ENCODE measurements at regions of chr16 and their contacts with region 1.

Region 1: GRCh38 chr16:8936421-8936820 is 27.3 kb downstream of the USP7 start:
- DNase-seq: peak; percentile 76
- ATAC-seq: peak; percentile 90
- H3K4me3 Mint-ChIP-seq: no peak overlapping the region
- H3K27ac Mint-ChIP-seq: peak overlapping the region; percentile 34; the same call in 1 of the 2 replicates
- H3K4me1 Mint-ChIP-seq: peaks cover 71% of the 10 kb centered on the region
- H3K27me3 Mint-ChIP-seq: no peaks in the 10 kb centered on the region
- CTCF ChIP-seq: peak; percentile 39; the same call in 1 of the 2 replicates

Region 2: DNA sequence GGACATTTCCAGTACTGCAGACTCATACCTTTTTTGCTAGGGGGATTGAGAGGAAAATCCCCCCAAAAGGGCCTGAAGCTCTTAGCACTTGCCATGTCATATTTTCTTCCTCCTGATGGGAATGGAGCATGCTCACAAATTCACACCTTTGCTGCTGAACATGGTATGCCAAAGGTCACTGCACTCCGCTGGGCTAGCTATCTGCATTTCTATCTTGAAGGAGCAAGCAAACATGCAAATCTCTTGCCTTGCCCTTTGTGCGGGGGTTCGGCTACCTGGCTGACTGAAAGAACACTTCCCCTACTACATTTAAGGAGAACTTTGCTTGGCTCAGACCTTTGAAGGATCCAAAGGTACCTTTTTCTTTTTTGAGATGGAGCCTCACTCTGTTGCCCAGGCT is 243.9 kb before region 1 on chr16:
- CTCF ChIA-PET with region 1: no interaction called
- POLR2A ChIA-PET with region 1: no interaction called
- DNase-seq: no peak
- ATAC-seq: no peak
- H3K4me3 Mint-ChIP-seq: no peak overlapping the region
- H3K27ac Mint-ChIP-seq: no peak overlapping the region
- H3K4me1 Mint-ChIP-seq: 0 out of 2 replicates have a peak, but pooled peaks cover 3% of the 10 kb centered on the region
- H3K27me3 Mint-ChIP-seq: no peaks in the 10 kb centered on the region; the same call in 1 of the 2 replicates
- CTCF ChIP-seq: no peak

Region 3: DNA sequence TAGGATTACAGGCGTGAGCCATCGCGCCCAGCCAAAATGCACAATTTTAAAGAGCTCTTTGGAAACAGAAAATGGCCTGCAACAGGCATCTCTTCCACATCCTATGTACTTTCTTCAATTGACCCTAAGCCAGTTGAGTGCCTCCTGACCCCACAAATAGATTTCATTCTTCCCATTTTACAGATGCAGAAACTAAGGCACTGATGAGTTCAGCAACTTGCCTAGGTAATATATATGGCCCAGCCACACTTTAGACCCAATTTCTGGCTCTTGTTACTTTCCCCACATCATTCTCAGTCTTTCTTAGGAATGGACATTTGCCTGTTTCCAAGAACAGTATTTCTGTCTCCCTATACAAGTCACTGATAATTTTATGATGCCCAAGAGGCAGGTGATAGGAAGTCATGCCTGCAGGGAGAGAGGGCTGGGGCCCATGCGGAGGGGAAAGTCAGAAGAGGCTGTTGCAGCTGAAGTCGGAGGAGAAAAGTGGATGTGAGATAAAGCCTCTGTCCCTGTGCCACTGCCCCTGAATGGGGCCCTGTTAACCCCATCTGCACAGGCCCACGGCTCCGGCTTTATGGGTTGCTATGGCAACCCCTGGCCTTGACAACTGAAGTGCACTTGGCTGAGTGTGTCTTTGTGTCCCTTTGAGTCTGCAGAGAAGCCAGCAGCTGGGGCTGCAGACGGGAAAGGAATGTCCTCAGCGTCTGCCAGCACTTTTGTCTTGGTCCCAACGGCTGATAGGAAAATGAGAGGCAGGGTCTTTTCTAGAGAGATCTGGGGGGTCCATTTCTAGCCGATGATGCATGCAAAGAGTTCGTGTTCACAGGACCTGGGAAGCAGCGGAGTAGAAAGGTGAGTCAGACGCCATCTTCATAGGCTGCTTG is 216.1 kb before region 1 on chr16:
- CTCF ChIA-PET with region 1: no interaction called
- POLR2A ChIA-PET with region 1: no interaction called
- DNase-seq: peak; percentile 55
- ATAC-seq: peak; percentile 83
- H3K4me3 Mint-ChIP-seq: no peak overlapping the region
- H3K27ac Mint-ChIP-seq: no peak overlapping the region
- H3K4me1 Mint-ChIP-seq: no peaks in the 10 kb centered on the region
- H3K27me3 Mint-ChIP-seq: no peaks in the 10 kb centered on the region
- CTCF ChIP-seq: no peak

Region 4: DNA sequence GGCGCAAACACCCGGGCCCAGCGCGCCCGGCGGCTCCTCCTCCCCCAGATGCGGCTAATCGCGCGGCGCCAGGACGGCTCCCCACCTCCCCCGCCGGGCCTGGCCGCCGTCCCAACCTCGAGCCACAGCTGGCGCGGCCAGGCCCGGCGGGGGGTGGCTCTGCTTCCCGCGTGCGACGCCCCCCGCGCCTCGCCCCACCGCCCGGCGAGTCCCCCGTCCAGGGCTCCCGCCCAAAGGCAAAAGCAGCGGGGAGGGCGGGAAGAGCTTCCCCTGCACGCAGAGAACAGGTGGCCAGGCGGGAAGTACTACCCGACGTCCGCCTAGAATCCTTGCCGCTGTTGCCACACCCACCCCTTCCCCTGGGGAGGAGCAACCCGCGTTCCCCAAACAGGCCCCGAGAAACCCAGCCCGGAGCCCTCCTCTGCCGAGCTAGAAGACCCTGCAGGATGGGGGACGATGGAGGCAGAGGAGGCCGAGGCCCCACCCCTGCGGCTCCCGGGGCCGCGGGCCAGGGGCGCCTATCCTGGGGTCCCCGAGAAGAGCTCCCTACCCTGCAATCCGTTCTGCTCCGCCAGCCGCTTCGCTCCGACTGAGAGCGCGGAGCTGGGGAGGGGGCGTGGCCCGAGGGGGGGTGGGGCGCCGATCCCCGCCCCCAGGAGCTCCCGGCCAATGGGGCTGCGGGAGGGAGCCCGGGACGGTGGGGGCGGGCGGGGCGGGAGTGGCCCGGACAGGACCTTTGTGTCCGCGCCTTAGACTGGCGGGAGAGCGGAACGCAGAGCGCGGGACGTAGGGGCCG is 67.8 kb before region 1 on chr16 and contains the start of gene CARHSP1:
- CTCF ChIA-PET with region 1: interaction called, 13 read pairs
- POLR2A ChIA-PET with region 1: no interaction called
- DNase-seq: peak; percentile 92
- ATAC-seq: peak; percentile 59
- H3K4me3 Mint-ChIP-seq: peak within 1 kb of the TSS; percentile 89
- H3K27ac Mint-ChIP-seq: peak within 1 kb of the TSS; percentile 99
- H3K4me1 Mint-ChIP-seq: peaks cover 40% of the 10 kb centered on the region
- H3K27me3 Mint-ChIP-seq: no peaks in the 10 kb centered on the region
- CTCF ChIP-seq: no peak
- total RNA-seq, gene CARHSP1: 260 to 271 TPM (median 261 TPM) in 3 replicates

Region 5: DNA sequence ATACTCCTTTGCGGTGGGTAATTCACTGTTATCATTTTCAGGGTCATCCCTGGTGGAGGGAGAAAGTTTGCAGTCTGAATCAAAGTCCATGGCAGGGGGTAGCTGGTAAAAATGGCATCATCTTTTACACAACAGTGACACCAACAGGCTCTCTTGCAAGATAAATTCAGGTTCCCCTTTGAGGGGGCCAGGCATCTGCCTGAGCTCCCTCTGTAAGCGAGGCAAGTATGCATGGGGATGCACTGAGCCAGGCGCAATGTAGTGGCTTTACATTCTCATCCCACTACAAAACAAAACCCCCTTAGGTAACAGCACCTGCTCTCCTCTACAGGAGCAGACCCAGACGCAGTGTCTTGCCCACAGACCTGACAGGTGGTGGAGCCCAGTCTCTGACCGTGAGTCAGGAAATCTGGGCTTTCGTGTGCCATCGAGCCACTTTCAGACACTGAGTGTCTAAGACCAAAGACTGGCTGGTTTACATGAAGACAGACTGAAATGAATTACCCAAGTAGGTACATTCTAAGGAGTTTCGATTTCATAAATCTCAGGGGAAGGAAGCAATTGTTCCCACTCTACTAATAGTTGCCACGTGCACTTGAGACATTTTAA is 36.6 kb before region 1 on chr16:
- CTCF ChIA-PET with region 1: interaction called, 15 read pairs
- POLR2A ChIA-PET with region 1: no interaction called
- DNase-seq: no peak
- ATAC-seq: peak; percentile 65
- H3K4me3 Mint-ChIP-seq: no peak overlapping the region
- H3K27ac Mint-ChIP-seq: peak overlapping the region; percentile 37
- H3K4me1 Mint-ChIP-seq: no peaks in the 10 kb centered on the region
- H3K27me3 Mint-ChIP-seq: no peaks in the 10 kb centered on the region
- CTCF ChIP-seq: no peak

Region 6: DNA sequence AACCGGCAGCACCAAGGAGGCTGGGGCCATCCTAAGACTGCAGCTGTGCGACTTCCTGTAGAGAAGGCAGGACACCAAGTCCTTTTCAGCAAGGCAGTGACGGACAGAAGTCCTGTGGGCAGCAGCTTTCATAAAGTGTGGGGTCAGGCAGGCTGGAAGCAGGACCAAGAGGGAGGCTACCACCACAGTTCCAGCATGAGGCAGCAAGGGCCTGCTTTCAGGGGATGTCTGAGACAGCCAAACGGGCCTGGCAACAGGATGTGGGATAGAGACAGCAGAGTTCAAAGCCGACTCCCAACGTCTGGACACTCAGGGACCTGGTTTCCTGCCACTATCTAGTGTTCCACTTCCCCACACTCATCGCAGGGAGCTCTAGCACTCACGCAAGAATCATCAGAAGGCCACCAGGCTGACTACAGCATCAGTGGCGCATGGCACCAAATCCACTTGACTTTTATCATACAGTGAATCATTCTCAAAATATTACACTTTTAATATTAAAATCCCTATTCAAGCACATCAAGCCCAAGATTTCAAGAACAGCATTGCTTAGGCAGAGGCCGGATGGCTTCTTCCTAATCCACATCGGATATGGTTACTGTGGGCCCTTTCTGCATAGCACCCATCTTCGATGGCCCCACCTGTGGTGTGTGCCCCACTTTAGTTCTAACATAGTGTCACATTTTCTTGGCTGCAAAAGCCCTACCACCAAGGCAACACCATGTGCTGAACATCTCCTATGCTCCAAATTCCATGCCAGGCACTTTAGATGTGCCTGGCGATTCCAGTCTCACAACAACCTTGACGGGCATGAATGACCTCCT is 22.1 kb after region 1 on chr16:
- CTCF ChIA-PET with region 1: interaction called, 43 read pairs
- POLR2A ChIA-PET with region 1: interaction called, 4 read pairs
- DNase-seq: no peak
- ATAC-seq: peak; percentile 7
- H3K4me3 Mint-ChIP-seq: peak overlapping the region; percentile 15; the same call in 1 of the 2 replicates
- H3K27ac Mint-ChIP-seq: peak overlapping the region; percentile 69
- H3K4me1 Mint-ChIP-seq: peaks cover 76% of the 10 kb centered on the region
- H3K27me3 Mint-ChIP-seq: no peaks in the 10 kb centered on the region
- CTCF ChIP-seq: no peak

Region 7: GRCh38 chr16:8989099-8989878 is 52.9 kb after region 1 on chr16:
- CTCF ChIA-PET with region 1: interaction called, 27 read pairs
- POLR2A ChIA-PET with region 1: no interaction called
- DNase-seq: no peak
- ATAC-seq: no peak
- H3K4me3 Mint-ChIP-seq: no peak overlapping the region
- H3K27ac Mint-ChIP-seq: no peak overlapping the region; the same call in 1 of the 2 replicates
- H3K4me1 Mint-ChIP-seq: peaks cover 30% of the 10 kb centered on the region
- H3K27me3 Mint-ChIP-seq: peaks cover 15% of the 10 kb centered on the region
- CTCF ChIP-seq: no peak

Region 8: DNA sequence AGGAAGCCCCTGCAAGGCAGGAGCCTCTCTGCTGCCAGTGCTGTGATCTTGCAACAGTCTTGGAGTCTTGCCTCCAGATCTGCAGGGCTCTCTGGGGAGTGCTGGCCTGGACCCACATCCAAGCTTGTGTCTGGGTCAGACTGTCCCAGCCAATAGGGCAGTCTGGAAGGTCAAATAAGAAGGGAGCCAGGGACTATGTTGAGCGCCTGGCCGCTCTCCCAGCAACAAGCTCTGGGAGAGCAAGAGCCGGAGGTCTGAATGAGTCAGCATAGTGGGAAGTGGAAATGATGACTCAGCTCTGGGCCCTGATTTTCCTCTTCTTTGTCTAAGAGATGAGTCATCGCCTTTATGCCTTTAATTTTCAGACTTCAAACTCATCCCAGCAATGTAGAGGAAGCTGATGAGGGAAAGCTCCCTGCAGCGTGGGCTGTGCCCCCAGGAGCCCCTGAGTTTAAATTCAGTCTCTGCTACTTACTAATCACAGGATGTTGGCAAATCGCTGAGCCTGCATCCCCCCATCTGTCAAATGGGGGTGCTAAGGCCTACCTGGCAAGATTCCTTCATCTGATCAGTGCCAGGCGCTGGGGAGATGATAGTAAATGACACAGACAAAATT is 111.4 kb after region 1 on chr16:
- CTCF ChIA-PET with region 1: interaction called, 27 read pairs
- POLR2A ChIA-PET with region 1: no interaction called
- DNase-seq: peak; percentile 24
- ATAC-seq: peak; percentile 80
- H3K4me3 Mint-ChIP-seq: no peak overlapping the region
- H3K27ac Mint-ChIP-seq: no peak overlapping the region; the same call in none of the 2 replicates
- H3K4me1 Mint-ChIP-seq: peaks cover 18% of the 10 kb centered on the region
- H3K27me3 Mint-ChIP-seq: no peaks in the 10 kb centered on the region
- CTCF ChIP-seq: no peak

Measured in WTC11 (cell line).